Activated B cell treated with CpG ODN at 0.5 μM for 24 hours (primary cell): ENCODE measurements at regions of chr13 and their contacts with region 1.

Region 1: DNA sequence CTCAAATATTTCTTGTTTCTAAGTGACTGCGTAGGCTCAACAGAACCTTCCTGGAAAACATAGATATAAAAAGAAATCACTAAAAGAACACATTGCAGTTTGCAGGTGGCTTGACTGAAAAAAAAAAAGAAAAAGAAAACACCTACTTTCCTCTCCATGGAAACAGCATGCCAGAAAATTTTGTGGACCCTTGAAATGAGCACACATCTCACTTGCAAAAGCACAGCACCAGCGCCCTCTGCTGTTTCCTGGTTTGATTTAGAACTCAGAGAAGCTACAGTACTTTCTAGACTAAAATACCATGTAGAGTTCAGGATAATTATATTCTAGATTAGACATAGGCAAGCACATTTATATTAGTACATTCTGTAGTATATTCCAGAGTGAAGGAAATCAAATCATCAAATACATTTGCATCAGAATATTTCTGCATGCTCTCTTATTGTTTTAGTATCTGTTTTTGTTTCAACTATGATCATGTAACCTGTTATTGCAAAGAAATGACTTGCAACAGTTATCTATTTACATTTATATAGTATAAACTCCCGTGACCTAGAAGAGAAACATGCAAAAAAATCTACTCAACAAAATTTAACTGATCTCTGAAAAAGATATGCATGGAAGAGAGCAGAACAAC is 22.3 kb upstream of the XPO4 start:
- DNase-seq: peak; percentile 24
- ATAC-seq: no peak
- H3K4me3 Mint-ChIP-seq: no peak overlapping the region
- H3K27ac Mint-ChIP-seq: no peak overlapping the region
- H3K4me1 Mint-ChIP-seq: no peaks in the 10 kb centered on the region
- H3K27me3 Mint-ChIP-seq: no peaks in the 10 kb centered on the region
- CTCF ChIP-seq: no peak

Region 2: DNA sequence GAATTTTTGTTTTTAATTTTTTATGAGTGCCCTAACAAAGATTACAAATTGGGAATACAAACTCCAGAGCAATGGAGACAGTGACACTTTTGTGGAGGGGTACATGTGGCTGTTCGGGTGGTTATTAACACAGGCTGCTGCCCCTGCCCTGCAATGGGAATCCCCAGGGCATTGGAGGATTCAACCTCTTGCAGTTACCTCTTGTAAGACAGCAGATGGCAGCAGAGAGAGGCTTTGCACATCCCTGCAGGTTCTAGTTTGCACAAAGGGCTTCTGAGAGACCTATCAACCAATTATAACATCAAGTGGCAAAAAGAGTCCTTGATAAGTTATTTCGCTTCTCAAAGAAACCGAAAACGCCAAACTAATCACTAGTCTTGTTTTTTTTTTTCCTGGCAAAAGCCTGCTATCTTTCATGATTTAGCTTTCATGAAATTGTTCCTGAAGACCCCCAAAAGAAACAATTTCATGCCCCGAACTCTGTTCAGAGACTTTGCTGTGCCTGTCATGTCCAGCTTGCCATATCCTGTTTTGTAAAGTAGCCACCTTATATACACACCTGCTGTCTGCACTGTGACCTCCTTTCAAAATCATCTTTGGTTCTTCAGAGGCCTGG is 742.5 kb before region 1 on chr13:
- CTCF ChIA-PET with region 1: interaction called, 5 read pairs
- POLR2A ChIA-PET with region 1: no interaction called
- intact Hi-C with region 1: loop called (anchors 1 kb)
- DNase-seq: no peak
- ATAC-seq: peak; percentile 100
- H3K4me3 Mint-ChIP-seq: no peak overlapping the region
- H3K27ac Mint-ChIP-seq: no peak overlapping the region
- H3K4me1 Mint-ChIP-seq: peaks cover 2% of the 10 kb centered on the region
- H3K27me3 Mint-ChIP-seq: peaks cover 44% of the 10 kb centered on the region
- CTCF ChIP-seq: peak; percentile 42

Region 3: GRCh38 chr13:20197361-20197834 is 727.5 kb before region 1 on chr13:
- CTCF ChIA-PET with region 1: interaction called, 11 read pairs
- POLR2A ChIA-PET with region 1: interaction called, 3 read pairs
- intact Hi-C with region 1: loop called (anchors 1 kb)
- DNase-seq: no peak
- ATAC-seq: peak; percentile 71
- H3K4me3 Mint-ChIP-seq: no peak overlapping the region
- H3K27ac Mint-ChIP-seq: no peak overlapping the region
- H3K4me1 Mint-ChIP-seq: peaks cover 16% of the 10 kb centered on the region
- H3K27me3 Mint-ChIP-seq: peaks cover 40% of the 10 kb centered on the region
- CTCF ChIP-seq: peak; percentile 6

Region 4: GRCh38 chr13:20713751-20714150 is 211.1 kb before region 1 on chr13:
- CTCF ChIA-PET with region 1: no interaction called
- POLR2A ChIA-PET with region 1: no interaction called
- intact Hi-C with region 1: loop called (anchors 1 kb)
- DNase-seq: no peak
- ATAC-seq: no peak
- H3K4me3 Mint-ChIP-seq: no peak overlapping the region
- H3K27ac Mint-ChIP-seq: no peak overlapping the region
- H3K4me1 Mint-ChIP-seq: peaks cover 7% of the 10 kb centered on the region
- H3K27me3 Mint-ChIP-seq: peaks cover 7% of the 10 kb centered on the region
- CTCF ChIP-seq: no peak

Region 5: GRCh38 chr13:21541980-21542379 is 617.1 kb after region 1 on chr13:
- CTCF ChIA-PET with region 1: no interaction called
- POLR2A ChIA-PET with region 1: no interaction called
- intact Hi-C with region 1: no loop called
- DNase-seq: no peak
- ATAC-seq: no peak
- H3K4me3 Mint-ChIP-seq: no peak overlapping the region
- H3K27ac Mint-ChIP-seq: no peak overlapping the region
- H3K4me1 Mint-ChIP-seq: peaks cover 24% of the 10 kb centered on the region
- H3K27me3 Mint-ChIP-seq: no peaks in the 10 kb centered on the region
- CTCF ChIP-seq: no peak